Activated CD8-positive, alpha-beta T cell treated with anti-CD3 and anti-CD28 coated beads for 36 hours (primary cell): ENCODE measurements at regions of chr21 and their contacts with region 1.

Region 1: GRCh38 chr21:34946916-34947534 is 102.1 kb downstream of the RUNX1 start:
- DNase-seq: no peak
- ATAC-seq: peak; percentile 67
- H3K4me3 Mint-ChIP-seq: no peak overlapping the region
- H3K27ac Mint-ChIP-seq: peak overlapping the region; percentile 95
- H3K4me1 Mint-ChIP-seq: peaks cover 86% of the 10 kb centered on the region
- H3K27me3 Mint-ChIP-seq: no peaks in the 10 kb centered on the region
- CTCF ChIP-seq: peak; percentile 42

Region 2: GRCh38 chr21:34933609-34934335 is 13.3 kb before region 1 on chr21:
- CTCF ChIA-PET with region 1: interaction called, 14 read pairs
- POLR2A ChIA-PET with region 1: interaction called, 32 read pairs
- intact Hi-C with region 1: loop called (anchors 1 kb)
- DNase-seq: peak; percentile 49
- ATAC-seq: peak; percentile 84
- H3K4me3 Mint-ChIP-seq: peak overlapping the region; percentile 75
- H3K27ac Mint-ChIP-seq: peak overlapping the region; percentile 98
- H3K4me1 Mint-ChIP-seq: peaks cover 82% of the 10 kb centered on the region
- H3K27me3 Mint-ChIP-seq: no peaks in the 10 kb centered on the region
- CTCF ChIP-seq: no peak

Region 3: GRCh38 chr21:34962136-34962535 is 15.1 kb after region 1 on chr21:
- CTCF ChIA-PET with region 1: interaction called, 21 read pairs
- POLR2A ChIA-PET with region 1: interaction called, 32 read pairs
- intact Hi-C with region 1: no loop called
- DNase-seq: no peak
- ATAC-seq: no peak
- H3K4me3 Mint-ChIP-seq: peak overlapping the region; percentile 57
- H3K27ac Mint-ChIP-seq: peak overlapping the region; percentile 95
- H3K4me1 Mint-ChIP-seq: peaks cover 78% of the 10 kb centered on the region
- H3K27me3 Mint-ChIP-seq: no peaks in the 10 kb centered on the region
- CTCF ChIP-seq: no peak

Region 4: GRCh38 chr21:34967509-34968289 is 20.7 kb after region 1 on chr21:
- CTCF ChIA-PET with region 1: interaction called, 21 read pairs
- POLR2A ChIA-PET with region 1: interaction called, 32 read pairs
- intact Hi-C with region 1: no loop called
- DNase-seq: peak; percentile 75
- ATAC-seq: peak; percentile 74
- H3K4me3 Mint-ChIP-seq: peak overlapping the region; percentile 29
- H3K27ac Mint-ChIP-seq: peak overlapping the region; percentile 89
- H3K4me1 Mint-ChIP-seq: peaks cover 87% of the 10 kb centered on the region
- H3K27me3 Mint-ChIP-seq: peaks cover 3% of the 10 kb centered on the region
- CTCF ChIP-seq: no peak

Region 5: DNA sequence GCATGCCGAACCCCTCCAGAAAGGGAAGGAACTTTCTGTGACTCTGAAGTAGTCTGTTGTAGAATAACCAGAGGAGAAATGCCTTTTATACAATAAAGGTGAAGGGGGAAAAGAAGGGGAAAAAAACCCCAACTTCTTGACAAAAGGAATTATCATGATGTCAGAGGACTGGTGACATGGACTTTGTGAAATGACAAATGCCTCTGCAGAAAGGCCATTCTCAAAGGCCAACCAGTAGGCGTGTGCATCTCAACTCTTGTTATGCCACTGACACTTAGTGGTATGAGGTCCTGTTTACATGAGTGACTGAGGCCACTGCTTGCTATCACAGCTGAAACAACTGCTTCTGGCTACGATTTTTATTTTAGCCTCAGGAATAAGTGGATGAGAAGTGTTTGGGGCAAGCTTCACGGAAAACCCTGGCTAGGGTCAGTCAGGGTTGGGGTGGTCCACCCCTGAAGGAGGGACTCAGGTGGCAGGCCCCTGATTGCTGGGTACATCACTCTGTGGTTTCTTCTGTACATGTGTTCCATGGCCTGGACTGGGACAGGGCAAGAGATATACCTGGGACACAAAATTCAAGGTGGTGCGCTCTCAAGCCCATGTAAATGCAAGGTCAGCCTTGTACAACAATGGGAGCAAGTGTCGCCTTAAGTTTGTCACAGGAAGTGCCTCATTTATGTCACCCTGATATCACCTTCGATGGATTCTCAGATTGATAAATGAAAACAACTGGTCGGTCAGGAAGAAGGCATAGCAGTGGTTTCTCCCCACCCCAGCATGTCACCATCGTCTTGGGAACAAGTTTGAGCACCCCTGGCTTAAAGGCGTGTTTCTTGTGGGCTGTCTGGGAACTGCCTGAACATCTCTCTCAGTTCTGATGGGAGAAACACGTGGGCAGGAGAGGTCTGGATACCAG is 89.7 kb after region 1 on chr21:
- CTCF ChIA-PET with region 1: interaction called, 4 read pairs
- POLR2A ChIA-PET with region 1: no interaction called
- intact Hi-C with region 1: loop called (anchors 2 kb)
- DNase-seq: peak; percentile 66
- ATAC-seq: peak; percentile 50
- H3K4me3 Mint-ChIP-seq: peak overlapping the region; percentile 63
- H3K27ac Mint-ChIP-seq: peak overlapping the region; percentile 90
- H3K4me1 Mint-ChIP-seq: peaks cover 96% of the 10 kb centered on the region
- H3K27me3 Mint-ChIP-seq: no peaks in the 10 kb centered on the region
- CTCF ChIP-seq: no peak